ENCODE measurements at regions of chr4 and their contacts with region 1.

Region 1: GRCh38 chr4:81405894-81406401 is 65.8 kb downstream of the RASGEF1B start:
- DNase-seq: no peak
- ATAC-seq: peak; percentile 88

Region 2: GRCh38 chr4:81255524-81255923 is 150.4 kb before region 1 on chr4:
- intact Hi-C with region 1: no loop called
- DNase-seq: no peak
- ATAC-seq: no peak

Region 3: DNA sequence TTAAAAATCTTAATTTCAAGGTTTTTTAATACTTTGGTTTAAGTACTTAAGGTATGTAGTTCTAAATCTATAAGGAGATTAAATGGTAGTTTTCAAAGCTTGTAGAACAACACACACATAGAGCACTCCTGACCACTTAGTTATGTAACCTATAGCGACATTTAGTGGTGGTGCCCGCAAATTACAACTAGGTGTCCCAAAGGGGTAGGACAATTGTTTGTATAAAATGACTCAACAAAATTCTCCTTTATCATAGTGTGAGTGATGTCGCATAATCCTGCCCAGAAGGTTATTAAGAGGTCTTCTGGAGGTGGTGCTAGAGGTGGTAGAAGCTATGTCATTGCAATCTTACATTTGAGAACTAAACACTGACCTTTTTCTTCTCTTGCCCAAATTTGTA is 438.8 kb after region 1 on chr4:
- intact Hi-C with region 1: loop called in 1 of 2 experiments (anchors 5 kb)
- DNase-seq: peak; percentile 72 to 79
- ATAC-seq: peak; percentile 96

Region 4: DNA sequence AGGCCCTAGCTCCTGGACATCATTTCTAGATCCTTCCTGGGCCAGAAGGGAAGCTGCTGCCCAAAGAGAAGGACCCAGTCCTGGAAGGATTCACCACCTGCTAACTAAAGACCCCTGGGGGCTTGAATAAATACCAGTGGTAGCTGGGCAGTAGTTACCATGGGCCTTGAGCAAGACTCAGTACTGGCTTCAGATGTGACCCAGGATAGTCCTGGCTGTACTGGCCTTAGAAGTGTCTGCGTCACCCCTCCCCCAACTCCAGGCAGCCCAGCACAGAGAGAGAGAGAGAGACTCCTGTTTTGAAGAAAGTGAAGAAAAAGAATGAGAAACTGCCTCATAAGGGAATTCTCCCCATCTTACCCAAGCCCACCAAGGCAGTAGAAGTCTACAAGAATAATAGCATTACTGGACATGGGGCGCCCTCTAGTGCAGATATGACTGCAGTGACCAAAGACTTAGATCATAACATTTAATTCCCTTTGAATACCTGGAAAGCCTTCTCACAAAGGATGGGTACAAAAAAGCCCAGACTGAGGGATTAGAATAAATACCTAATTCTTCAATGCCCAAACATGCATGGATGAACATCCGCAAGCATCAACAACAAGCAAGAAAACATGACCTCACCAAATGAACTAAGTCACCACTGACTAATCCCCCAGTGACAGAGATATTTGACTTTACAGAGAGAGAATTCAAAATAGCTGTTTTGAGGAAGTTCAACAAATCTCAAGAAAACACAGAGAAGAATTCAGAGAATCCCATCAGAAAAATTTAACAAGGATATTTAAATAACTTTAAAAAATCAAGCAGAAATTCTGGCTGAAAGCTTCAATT is 796.1 kb after region 1 on chr4:
- intact Hi-C with region 1: loop called in 1 of 2 experiments (anchors 5 kb)
- DNase-seq: peak in 1 of 2 donors; percentile 58
- ATAC-seq: peak; percentile 49

Region 5: GRCh38 chr4:82268050-82268825 is 862.3 kb after region 1 on chr4:
- intact Hi-C with region 1: loop called in 1 of 2 experiments (anchors 5 kb)
- DNase-seq: peak in 1 of 2 donors; percentile 37
- ATAC-seq: peak; percentile 83

Measured in left colon (tissue), 2 donors.